Esophagus squamous epithelium (tissue), 5 donors: ENCODE measurements at regions of chr5 and their contacts with region 1.

Region 1: GRCh38 chr5:178859625-178860531 is at the start of gene ZNF354B:
- DNase-seq: peak; percentile 33
- H3K4me3 ChIP-seq: peak within 1 kb of the TSS; percentile 70 to 95 (median 84)
- H3K27ac ChIP-seq: peak within 1 kb of the TSS; percentile 79 to 92 (median 86)
- H3K4me1 ChIP-seq: peaks cover 0 to 26% (median 14%) of the 10 kb centered on the region in 3 donors
- H3K27me3 ChIP-seq: no peaks in the 10 kb centered on the region
- CTCF ChIP-seq: peak in 2 of 6 experiments; percentile 17 to 22
- POLR2A ChIP-seq: peak in 3 of 4 donors; percentile 27 to 81 (median 49)
- total RNA-seq, gene ZNF354B: 6.0 to 19.3 (median 8.6) TPM

Region 2: GRCh38 chr5:178732281-178732680 is 127.6 kb before region 1 on chr5:
- intact Hi-C with region 1: loop called (anchors 10 kb)
- DNase-seq: no peak
- H3K4me3 ChIP-seq: no peak overlapping the region
- H3K27ac ChIP-seq: no peak overlapping the region
- H3K4me1 ChIP-seq: peaks cover 2 to 16% (median 4%) of the 10 kb centered on the region in 3 donors
- H3K27me3 ChIP-seq: no peaks in the 10 kb centered on the region
- CTCF ChIP-seq: no peak
- POLR2A ChIP-seq: no peak

Region 3: GRCh38 chr5:179142434-179143198 is 282.7 kb after region 1 on chr5:
- intact Hi-C with region 1: no loop called
- DNase-seq: no peak
- H3K4me3 ChIP-seq: no peak overlapping the region
- H3K27ac ChIP-seq: peak overlapping the region in 1 of 4 donors; percentile 33
- H3K4me1 ChIP-seq: peaks cover 0 to 21% (median 0%) of the 10 kb centered on the region in 3 donors
- H3K27me3 ChIP-seq: peaks cover 0 to 22% (median 0%) of the 10 kb centered on the region in 4 donors
- CTCF ChIP-seq: no peak
- POLR2A ChIP-seq: no peak